ENCODE measurements at regions of chr4 and their contacts with region 1.

Region 1: DNA sequence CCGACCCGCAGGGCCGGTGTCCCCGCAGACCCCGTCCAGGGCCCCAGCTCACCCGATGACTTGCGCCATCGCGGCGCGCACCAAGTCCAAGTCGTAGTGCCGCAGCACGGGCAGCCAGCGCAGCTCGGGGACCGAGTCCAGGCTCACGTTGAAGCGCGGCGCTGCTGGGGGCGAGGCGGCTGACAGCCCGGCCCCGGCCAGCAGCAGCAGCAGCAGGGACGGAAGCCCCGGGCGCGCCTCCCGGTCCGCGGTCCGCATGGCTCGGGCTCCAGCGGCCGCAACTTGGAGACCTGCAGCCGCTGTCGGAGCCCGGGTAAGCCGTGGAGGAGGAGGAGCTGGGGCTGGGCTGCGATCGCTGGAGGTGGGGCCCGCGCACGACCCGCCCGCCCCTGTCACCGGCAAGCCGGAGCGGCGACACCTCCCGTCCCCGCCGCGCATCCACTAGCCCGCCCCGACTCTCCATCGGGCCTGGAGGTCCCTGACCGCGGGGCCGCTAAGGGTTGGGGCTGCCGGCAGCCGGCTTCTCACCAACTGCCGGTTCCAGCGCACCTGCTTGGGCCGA is at the start of gene NAAA:
- DNase-seq: peak; percentile 96
- H3K4me3 Mint-ChIP-seq: peak within 1 kb of the TSS; percentile 98
- H3K27ac Mint-ChIP-seq: peak within 1 kb of the TSS; percentile 99
- H3K4me1 Mint-ChIP-seq: peaks cover 17% of the 10 kb centered on the region
- H3K27me3 Mint-ChIP-seq: no peaks in the 10 kb centered on the region
- total RNA-seq, gene NAAA: 31.9 and 35.6 TPM in 2 replicates

Region 2: GRCh38 chr4:75916091-75916661 is 24.6 kb before region 1 on chr4:
- intact Hi-C with region 1: loop called (anchors 1 kb)
- DNase-seq: peak; percentile 79
- H3K4me3 Mint-ChIP-seq: no peak overlapping the region
- H3K27ac Mint-ChIP-seq: no peak overlapping the region
- H3K4me1 Mint-ChIP-seq: no peaks in the 10 kb centered on the region
- H3K27me3 Mint-ChIP-seq: no peaks in the 10 kb centered on the region

Region 3: DNA sequence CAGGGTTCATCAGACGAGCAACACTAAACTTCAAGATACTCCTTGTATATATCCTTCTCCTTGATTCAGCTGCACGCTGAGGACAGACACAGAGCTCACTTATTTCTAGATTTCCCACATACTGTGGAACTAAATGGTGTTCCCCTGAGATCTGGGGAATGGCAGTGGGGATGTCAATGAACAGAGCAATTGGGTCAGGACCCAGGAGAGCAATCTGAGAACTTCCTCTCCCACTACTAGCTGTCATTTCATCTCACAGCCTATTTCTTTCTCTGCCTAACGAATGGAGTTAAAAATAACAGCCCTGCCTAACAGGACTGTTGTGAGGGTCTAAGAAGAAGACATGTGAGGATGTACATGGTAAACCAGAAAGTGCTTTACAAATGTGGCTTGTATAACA is 10.6 kb before region 1 on chr4:
- intact Hi-C with region 1: loop called (anchors 1 kb)
- DNase-seq: no peak
- H3K4me3 Mint-ChIP-seq: no peak overlapping the region
- H3K27ac Mint-ChIP-seq: no peak overlapping the region
- H3K4me1 Mint-ChIP-seq: no peaks in the 10 kb centered on the region
- H3K27me3 Mint-ChIP-seq: no peaks in the 10 kb centered on the region

Region 4: GRCh38 chr4:75989846-75990528 is 49.2 kb after region 1 on chr4:
- intact Hi-C with region 1: loop called (anchors 1 kb)
- DNase-seq: no peak
- H3K4me3 Mint-ChIP-seq: peak overlapping the region; percentile 89
- H3K27ac Mint-ChIP-seq: peak overlapping the region; percentile 81
- H3K4me1 Mint-ChIP-seq: peaks cover 31% of the 10 kb centered on the region
- H3K27me3 Mint-ChIP-seq: peaks cover 9% of the 10 kb centered on the region

Measured in activated CD4-positive, alpha-beta T cell treated with anti-CD3 and anti-CD28 coated beads, Interleukin-2, amount 10 ng/mL, durations not matched to agents 24 days and 14 days (primary cell).